Activated naive CD4-positive, alpha-beta T cell treated with anti-CD3 and anti-CD28 coated beads, Interleukin-2, amount 10 ng/mL, durations not matched to agents 7 days and 5 days (primary cell): ENCODE measurements at regions of chr17 and their contacts with region 1.

Region 1: DNA sequence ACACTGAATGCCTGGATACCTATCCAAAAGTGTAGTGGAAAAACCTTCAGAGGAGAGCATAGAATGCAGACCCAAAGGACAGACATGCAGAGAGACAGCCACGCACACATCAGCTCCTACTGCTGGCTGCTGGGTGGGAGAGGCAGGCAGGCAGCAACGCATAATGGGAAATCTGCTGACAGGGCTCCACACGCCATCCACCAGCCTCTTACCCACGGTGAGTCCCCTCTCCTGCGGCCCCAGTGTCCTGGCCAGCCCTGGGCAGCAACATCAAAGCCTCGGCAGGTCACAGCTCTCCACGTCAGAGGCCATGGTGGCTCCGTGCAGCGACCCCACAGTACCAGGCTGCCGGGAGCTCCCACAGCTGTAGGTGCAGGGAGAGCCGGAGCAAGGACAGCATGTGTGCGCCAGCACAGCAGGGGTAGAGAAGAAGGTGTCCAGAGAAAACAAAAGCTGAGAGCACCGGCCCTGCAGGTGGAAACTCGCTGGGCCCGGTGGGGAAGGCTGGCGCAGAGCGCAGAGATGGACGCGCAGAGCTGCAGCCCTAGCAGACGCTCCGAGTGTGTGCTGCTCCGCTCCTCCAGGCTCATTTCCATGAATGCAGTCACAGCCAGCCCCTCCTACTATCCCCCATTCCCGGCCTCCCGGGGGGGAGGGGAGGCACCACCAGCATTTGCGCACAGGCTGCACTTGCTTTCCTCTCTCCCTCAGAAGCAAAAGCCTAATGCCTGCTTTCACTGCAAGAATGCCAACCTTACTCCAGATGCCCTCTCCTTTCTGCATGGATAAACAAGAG is 58.9 kb downstream of the CYTH1 start:
- DNase-seq: no peak
- H3K4me3 Mint-ChIP-seq: no peak overlapping the region
- H3K27ac Mint-ChIP-seq: peak overlapping the region; percentile 11
- H3K4me1 Mint-ChIP-seq: peaks cover 93% of the 10 kb centered on the region
- H3K27me3 Mint-ChIP-seq: no peaks in the 10 kb centered on the region

Region 2: GRCh38 chr17:78583091-78583490 is 140.1 kb before region 1 on chr17:
- CTCF ChIA-PET with region 1: no interaction called
- DNase-seq: peak; percentile 26
- H3K4me3 Mint-ChIP-seq: no peak overlapping the region
- H3K27ac Mint-ChIP-seq: no peak overlapping the region
- H3K4me1 Mint-ChIP-seq: no peaks in the 10 kb centered on the region
- H3K27me3 Mint-ChIP-seq: peaks cover 62% of the 10 kb centered on the region

Region 3: GRCh38 chr17:78708510-78708973 is 14.7 kb before region 1 on chr17:
- CTCF ChIA-PET with region 1: interaction called, 19 read pairs
- DNase-seq: peak; percentile 70
- H3K4me3 Mint-ChIP-seq: peak overlapping the region; percentile 47
- H3K27ac Mint-ChIP-seq: peak overlapping the region; percentile 89
- H3K4me1 Mint-ChIP-seq: peaks cover 58% of the 10 kb centered on the region
- H3K27me3 Mint-ChIP-seq: no peaks in the 10 kb centered on the region

Region 4: GRCh38 chr17:78736526-78737079 is 13.4 kb after region 1 on chr17:
- CTCF ChIA-PET with region 1: interaction called, 11 read pairs
- DNase-seq: peak; percentile 84
- H3K4me3 Mint-ChIP-seq: peak overlapping the region; percentile 88
- H3K27ac Mint-ChIP-seq: peak overlapping the region; percentile 94
- H3K4me1 Mint-ChIP-seq: peaks cover 93% of the 10 kb centered on the region
- H3K27me3 Mint-ChIP-seq: no peaks in the 10 kb centered on the region

Region 5: GRCh38 chr17:78748730-78749317 is 25.6 kb after region 1 on chr17:
- CTCF ChIA-PET with region 1: no interaction called
- DNase-seq: peak; percentile 90
- H3K4me3 Mint-ChIP-seq: peak overlapping the region; percentile 72
- H3K27ac Mint-ChIP-seq: peak overlapping the region; percentile 91
- H3K4me1 Mint-ChIP-seq: peaks cover 96% of the 10 kb centered on the region
- H3K27me3 Mint-ChIP-seq: no peaks in the 10 kb centered on the region

Region 6: DNA sequence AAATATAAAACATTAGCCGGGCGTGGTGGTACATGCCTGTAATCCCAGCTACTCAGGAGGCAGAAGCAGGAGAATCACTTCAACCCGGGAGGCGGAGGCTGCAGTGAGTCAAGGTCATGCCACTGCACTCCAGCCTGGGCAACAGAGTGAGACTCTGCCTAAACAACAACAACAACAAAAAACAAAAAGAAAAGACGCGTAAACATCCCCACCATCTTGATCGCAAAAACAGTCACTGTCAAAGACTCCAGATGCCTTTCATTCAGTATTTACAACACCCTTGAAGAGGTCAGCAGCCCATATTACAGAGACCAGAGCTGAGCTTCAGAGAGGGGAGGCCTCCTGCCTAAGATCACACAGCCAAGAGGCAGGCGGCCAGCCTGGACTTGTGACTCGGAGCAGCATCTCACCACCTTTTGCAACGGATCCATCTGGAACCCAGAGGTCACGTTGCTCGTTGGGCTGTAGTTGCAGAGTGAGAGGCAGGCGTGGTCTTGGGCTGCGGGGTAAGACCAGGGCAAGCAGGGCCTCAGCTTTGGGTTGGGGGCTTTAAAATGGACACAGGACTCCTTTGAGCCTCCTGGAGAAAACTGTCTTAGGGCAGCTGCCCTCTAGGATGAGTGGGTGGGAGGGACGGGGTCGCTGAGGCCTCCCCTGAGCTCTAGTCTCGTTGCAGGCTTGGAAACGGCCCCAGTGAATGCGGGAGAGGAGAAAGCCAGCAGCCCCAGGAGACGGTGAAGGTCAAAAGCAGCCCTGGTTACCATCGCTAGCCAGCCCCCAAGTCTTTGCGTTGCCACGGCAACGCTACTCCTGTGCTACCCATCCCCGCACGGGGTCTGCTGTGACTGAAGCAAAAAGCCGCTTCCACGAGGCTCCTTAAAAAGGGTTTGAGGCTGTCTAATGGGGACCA is 230.4 kb after region 1 on chr17:
- CTCF ChIA-PET with region 1: no interaction called
- DNase-seq: no peak
- H3K4me3 Mint-ChIP-seq: no peak overlapping the region
- H3K27ac Mint-ChIP-seq: no peak overlapping the region
- H3K4me1 Mint-ChIP-seq: no peaks in the 10 kb centered on the region
- H3K27me3 Mint-ChIP-seq: peaks cover 23% of the 10 kb centered on the region